Activated naive CD4-positive, alpha-beta T cell treated with anti-CD3 and anti-CD28 coated beads, Interleukin-2, amount 10 ng/mL, durations not matched to agents 7 days and 5 days (primary cell): ENCODE measurements at regions of chr20 and their contacts with region 1.

Region 1: DNA sequence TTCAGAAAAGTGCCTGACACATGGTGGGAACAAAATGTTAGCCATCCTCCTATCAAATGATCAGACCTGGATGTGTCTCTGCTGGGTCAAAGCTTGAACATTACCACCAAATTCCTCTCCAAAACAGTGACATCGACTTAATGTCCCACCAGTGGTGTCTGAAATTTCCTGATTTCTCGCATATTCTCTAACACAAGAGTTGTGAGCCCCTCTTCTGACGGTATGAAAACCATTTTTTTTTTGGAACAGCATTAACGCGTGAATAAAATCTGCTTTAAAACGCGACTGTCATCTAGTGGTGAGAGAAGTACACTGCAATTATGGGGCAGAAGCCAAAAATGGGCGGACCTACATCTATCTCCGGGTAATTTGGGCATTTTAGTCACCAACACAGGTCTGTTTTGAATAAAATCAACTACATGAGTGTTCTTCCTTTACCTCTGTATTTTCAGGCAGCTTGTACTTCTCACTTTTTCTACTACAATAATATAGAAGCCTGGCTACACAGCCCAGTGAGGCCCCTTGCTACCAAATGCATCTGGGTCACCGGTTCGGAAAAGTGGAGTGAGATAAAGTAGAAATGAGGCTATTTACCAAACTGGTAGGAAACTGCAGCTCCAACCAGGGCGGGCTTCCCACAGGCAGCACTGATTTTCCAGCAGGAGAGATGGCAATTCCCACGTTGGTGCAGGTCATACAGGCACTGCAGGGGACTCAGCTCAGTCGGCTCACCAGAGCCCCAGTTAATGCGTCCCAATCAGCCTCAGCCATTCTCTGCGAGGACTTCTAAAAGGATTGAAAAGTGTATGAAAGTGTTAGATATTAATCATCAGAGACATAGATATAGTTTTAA is 27.4 kb downstream of the MGME1 start:
- DNase-seq: peak; percentile 57
- H3K4me3 Mint-ChIP-seq: no peak overlapping the region
- H3K27ac Mint-ChIP-seq: no peak overlapping the region
- H3K4me1 Mint-ChIP-seq: peaks cover 41% of the 10 kb centered on the region
- H3K27me3 Mint-ChIP-seq: peaks cover 18% of the 10 kb centered on the region

Region 2: DNA sequence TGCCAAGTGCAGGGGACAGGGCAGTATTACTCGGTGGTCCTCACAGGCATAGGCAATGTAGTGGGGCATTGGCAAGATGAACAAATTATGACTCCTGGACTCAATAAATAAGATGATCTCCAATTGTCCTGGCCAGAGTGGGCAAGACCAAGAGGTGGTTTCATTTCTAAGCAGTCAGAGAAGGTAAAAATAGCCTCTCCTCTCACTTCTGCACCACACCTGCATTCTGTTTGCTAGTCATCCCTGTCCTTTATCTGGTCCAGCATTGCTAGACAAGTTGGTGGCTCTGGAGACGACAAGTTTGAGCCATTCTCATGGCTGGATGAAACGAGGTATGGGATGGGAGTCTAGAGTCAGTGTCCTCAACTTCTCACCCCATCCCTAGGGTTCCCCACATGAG is 213.4 kb before region 1 on chr20:
- CTCF ChIA-PET with region 1: no interaction called
- DNase-seq: no peak
- H3K4me3 Mint-ChIP-seq: no peak overlapping the region
- H3K27ac Mint-ChIP-seq: no peak overlapping the region
- H3K4me1 Mint-ChIP-seq: no peaks in the 10 kb centered on the region
- H3K27me3 Mint-ChIP-seq: peaks cover 14% of the 10 kb centered on the region

Region 3: DNA sequence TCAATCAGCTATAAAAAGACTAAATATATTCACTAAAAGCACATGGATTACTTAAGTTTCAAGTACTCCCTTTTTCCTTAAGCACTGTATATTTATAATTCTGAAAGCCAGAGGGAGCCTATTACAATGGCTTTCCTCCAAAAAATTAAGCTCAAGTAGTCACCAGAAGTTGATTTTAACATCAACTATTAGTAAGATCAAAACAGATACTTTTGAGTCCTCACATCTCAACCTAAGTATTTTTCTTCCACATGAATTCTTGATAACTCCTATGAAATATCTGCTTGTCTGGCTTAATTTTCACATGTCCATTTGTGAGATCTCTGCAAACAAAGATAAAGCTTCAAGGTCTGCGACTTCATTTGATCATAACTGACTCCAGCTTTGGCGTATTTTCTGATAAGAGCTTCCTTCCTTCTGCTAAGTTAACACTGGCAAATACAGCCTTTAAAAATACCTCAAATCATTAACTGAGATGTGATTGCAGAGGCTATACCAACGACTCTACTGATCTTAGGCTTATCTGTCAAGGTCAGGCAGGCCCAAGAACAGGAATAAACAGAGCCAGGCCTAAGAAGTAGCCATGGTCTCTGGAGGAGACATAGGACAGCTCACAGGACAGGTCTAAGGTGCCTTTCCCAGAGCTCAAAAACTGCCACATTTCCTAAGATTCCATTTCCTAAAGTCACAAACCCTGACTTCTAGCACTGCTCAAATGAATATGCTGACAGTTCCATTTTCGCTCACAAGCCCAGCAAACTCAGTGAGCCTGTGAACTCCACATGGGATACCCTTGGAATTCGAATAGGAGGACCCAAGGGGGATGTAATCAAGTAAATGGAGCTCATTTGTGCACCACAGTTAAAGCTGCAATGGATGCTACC is 37.6 kb before region 1 on chr20:
- CTCF ChIA-PET with region 1: interaction called, 16 read pairs
- DNase-seq: no peak
- H3K4me3 Mint-ChIP-seq: no peak overlapping the region
- H3K27ac Mint-ChIP-seq: peak overlapping the region; percentile 75
- H3K4me1 Mint-ChIP-seq: peaks cover 88% of the 10 kb centered on the region
- H3K27me3 Mint-ChIP-seq: no peaks in the 10 kb centered on the region

Region 4: DNA sequence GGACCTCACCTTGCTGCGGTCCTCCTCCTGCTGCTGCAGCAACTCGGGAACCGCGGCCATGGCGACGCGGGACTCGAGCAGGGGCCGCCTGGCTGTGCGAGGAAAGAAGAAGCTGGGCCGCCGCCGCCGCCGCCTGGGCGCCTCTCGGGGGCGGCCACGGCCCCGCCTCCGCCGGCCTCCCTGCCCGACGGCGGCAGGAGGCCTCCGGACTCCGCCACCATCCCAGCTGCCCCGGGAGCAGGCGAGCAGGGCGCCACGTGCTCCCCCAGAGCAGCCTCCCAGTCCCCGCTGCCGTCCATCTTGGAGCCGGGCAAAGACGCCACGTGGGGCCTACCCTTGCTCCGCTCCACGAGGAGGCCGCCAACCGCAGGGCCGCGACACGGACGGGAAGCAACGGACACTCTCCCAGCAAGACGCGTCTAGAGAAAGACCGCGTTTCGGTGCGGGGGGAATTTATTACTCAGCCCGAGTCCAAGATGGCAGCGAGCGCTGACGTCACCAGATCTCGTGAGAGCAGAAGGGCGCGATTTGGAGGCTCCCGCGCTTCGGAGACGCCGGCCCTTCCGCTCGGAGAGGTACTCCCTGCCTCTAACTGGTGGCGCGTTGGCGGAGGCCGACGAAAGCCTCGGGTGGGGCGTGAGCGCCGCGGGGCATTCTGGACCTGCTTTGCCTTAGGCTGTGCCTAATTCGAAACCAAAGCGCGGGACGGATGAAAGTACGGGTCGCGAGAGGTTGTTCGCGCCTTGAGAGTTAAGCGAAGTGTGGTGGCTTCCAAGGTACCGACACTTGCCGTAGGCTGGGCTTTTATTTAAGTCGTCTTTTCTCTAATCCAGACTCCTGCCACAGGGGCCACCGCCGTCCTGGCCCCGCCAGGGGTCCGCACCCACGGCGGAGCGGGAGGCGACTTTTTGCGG is 27.6 kb before region 1 on chr20 and contains the starts of genes MGME1 and SNX5:
- CTCF ChIA-PET with region 1: interaction called, 11 read pairs
- DNase-seq: peak; percentile 100
- H3K4me3 Mint-ChIP-seq: peak within 1 kb of the TSS; percentile 100
- H3K27ac Mint-ChIP-seq: peak within 1 kb of the TSS; percentile 100
- H3K4me1 Mint-ChIP-seq: peaks cover 55% of the 10 kb centered on the region
- H3K27me3 Mint-ChIP-seq: peaks cover 5% of the 10 kb centered on the region